Right cardiac atrium (tissue), 5 donors: ENCODE measurements at regions of chr11 and their contacts with region 1.

Region 1: DNA sequence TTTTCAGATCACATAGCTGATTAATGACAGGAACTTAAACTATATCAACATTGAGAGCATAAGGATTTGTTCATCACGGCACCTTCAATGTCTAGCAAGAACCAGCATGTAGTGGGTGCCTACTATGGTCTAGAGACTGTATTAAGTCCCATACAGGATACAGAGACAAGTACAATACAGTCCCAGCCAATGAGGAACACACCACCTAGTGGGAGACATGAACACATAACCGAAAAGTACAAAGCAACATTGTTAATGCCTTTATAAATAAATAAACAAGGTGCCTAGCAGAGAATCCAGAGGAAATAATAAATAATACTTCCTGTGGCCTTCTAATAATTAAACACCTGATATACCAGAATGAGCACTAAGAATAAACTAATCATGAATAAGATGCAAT is 87.7 kb upstream of the OPCML start:
- DNase-seq: no peak
- ATAC-seq: peak; percentile 50 to 82
- H3K4me3 ChIP-seq: no peak overlapping the region
- H3K27ac ChIP-seq: no peak overlapping the region
- H3K4me1 ChIP-seq: no peaks in the 10 kb centered on the region
- H3K27me3 ChIP-seq: no peaks in the 10 kb centered on the region

Region 2: DNA sequence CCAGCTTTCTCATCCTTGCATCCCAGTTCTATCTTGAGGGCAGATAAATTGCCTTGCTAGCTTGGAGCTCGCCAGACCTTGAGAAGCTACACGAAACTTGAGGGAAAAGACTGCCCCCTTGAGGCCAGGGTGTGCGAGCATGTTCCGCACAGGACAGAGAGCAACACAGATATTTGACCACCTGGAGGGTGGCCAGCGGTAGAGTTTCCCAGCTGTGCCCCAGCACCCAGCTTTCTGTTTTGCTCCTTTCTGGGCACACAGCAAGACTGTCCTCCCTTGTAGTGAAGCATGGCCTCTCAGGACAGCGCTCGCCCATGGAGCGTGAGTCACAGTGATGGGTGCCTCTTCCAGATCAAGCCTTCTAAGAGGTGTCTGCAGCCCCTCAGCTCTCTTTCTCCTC is 201.8 kb after region 1 on chr11:
- intact Hi-C with region 1: loop called in 1 of 4 experiments (anchors 5 kb)
- DNase-seq: peak; percentile 60 to 82 (median 77)
- ATAC-seq: peak; percentile 75 to 81
- H3K4me3 ChIP-seq: no peak overlapping the region
- H3K27ac ChIP-seq: no peak overlapping the region
- H3K4me1 ChIP-seq: no peaks in the 10 kb centered on the region
- H3K27me3 ChIP-seq: no peaks in the 10 kb centered on the region